ENCODE measurements at regions of chr7 and their contacts with region 1.

Region 1: GRCh38 chr7:90455163-90456030 is 14.0 kb upstream of the PTTG1IP2 start:
- DNase-seq: no peak
- H3K4me3 Mint-ChIP-seq: no peak overlapping the region
- H3K27ac Mint-ChIP-seq: no peak overlapping the region
- H3K4me1 Mint-ChIP-seq: peaks cover 3% of the 10 kb centered on the region
- H3K27me3 Mint-ChIP-seq: peaks cover 15% of the 10 kb centered on the region

Region 2: DNA sequence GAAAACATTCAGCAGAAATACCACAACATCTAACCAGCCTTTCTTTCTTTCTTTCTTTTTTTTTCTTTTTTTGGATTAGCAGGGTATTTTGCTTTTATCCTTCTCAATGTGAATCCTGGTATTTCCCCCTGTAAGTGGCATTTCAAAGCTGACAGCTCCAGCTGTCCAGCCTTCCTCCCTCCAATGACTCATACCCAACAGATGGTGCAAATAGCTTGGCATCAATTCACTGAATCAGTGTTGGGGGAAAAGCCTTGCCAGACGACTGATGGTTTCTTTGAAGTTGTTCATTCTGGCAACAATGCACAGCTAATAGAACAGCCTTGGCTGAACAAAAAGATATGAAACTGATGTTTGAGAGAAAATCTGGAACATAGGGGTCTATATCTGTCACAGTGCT is 617.9 kb before region 1 on chr7:
- intact Hi-C with region 1: no loop called
- DNase-seq: no peak
- H3K4me3 Mint-ChIP-seq: no peak overlapping the region
- H3K27ac Mint-ChIP-seq: no peak overlapping the region
- H3K4me1 Mint-ChIP-seq: peaks cover 8% of the 10 kb centered on the region
- H3K27me3 Mint-ChIP-seq: no peaks in the 10 kb centered on the region

Region 3: DNA sequence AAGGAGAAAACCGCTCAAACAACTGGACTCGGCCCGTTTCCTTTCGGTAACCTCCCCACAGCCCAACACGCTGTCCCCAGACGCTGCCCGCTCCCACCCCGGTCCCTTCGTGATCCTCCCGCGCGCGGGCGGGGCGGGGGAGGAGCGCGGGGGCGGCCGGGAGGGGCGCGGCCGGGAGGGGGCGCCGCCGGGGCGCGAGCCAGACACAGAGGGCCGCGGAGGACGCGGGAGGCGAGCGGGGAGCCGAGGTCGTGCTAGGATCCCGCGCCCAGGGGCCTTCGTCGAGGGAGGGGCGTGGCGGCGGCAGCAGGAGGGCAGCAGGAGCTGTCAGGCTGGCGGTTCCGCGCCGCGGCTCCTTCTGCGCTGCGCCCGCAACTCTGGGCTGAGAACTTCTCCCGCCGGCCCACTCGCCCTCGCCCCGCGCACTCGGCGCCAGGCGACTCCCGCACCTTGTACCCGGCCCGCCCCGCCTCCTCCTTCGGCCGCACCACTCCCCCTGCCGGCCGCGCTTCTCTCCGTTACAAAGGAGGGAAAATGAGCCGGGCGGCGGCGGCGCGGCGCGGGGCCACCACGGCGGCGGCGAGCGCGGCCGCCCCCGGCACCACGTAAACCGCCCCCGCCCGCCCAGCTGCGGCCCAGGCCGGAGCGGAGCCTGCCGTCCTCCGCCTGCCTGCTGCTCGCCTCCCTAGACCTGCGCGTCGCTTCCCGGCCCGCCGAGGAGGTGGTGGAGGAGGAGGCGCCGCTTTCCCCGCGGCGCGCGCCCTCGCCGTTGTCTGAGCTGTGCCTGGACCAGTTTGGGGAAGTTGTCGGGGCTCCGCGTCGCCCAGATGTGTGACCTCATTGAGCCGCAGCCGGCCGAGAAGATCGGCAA is 140.6 kb after region 1 on chr7 and contains the start of gene CDK14:
- intact Hi-C with region 1: no loop called
- DNase-seq: peak; percentile 30
- H3K4me3 Mint-ChIP-seq: peak within 1 kb of the TSS; percentile 79
- H3K27ac Mint-ChIP-seq: peak within 1 kb of the TSS; percentile 17
- H3K4me1 Mint-ChIP-seq: peaks cover 12% of the 10 kb centered on the region
- H3K27me3 Mint-ChIP-seq: peaks cover 61% of the 10 kb centered on the region
- total RNA-seq, gene CDK14: 2.1 and 2.2 TPM in 2 replicates

Region 4: DNA sequence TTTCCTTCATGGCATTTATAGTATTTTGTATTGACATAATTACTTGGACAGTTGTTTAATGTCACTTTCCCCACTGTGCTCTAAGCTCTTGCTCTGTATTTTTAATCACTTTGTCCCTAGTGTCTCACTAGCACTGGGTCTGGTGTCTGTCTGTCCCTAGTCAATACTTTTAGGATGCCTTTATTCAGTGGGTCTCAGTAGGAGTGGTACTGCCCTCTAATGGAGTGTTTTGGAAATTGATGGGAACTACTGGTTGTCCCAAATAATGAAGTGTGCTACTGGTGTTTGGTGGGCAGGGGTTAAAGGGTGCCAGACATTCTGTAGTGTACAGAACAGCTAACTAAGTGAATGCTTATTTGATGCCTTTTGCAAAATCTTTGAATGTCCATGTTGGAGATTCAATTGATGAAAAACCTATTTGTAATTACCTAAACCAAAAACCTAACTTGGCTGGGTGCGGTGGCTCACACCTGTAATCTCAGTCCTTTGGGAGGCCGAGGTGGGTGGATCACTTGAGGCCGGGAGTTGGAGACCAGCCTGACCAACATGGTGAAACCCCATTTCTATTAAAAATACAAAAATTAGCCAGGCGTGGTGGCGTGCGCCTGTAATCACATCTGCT is 174.0 kb after region 1 on chr7:
- intact Hi-C with region 1: loop called (anchors 1 kb)
- DNase-seq: no peak
- H3K4me3 Mint-ChIP-seq: no peak overlapping the region
- H3K27ac Mint-ChIP-seq: no peak overlapping the region
- H3K4me1 Mint-ChIP-seq: no peaks in the 10 kb centered on the region
- H3K27me3 Mint-ChIP-seq: no peaks in the 10 kb centered on the region

Region 5: GRCh38 chr7:91034459-91035368 is 579.3 kb after region 1 on chr7:
- intact Hi-C with region 1: loop called (anchors 1 kb)
- DNase-seq: no peak
- H3K4me3 Mint-ChIP-seq: no peak overlapping the region
- H3K27ac Mint-ChIP-seq: no peak overlapping the region
- H3K4me1 Mint-ChIP-seq: no peaks in the 10 kb centered on the region
- H3K27me3 Mint-ChIP-seq: no peaks in the 10 kb centered on the region